K562 (cell line): ENCODE measurements at regions of chr17 and their contacts with region 1.

Region 1: DNA sequence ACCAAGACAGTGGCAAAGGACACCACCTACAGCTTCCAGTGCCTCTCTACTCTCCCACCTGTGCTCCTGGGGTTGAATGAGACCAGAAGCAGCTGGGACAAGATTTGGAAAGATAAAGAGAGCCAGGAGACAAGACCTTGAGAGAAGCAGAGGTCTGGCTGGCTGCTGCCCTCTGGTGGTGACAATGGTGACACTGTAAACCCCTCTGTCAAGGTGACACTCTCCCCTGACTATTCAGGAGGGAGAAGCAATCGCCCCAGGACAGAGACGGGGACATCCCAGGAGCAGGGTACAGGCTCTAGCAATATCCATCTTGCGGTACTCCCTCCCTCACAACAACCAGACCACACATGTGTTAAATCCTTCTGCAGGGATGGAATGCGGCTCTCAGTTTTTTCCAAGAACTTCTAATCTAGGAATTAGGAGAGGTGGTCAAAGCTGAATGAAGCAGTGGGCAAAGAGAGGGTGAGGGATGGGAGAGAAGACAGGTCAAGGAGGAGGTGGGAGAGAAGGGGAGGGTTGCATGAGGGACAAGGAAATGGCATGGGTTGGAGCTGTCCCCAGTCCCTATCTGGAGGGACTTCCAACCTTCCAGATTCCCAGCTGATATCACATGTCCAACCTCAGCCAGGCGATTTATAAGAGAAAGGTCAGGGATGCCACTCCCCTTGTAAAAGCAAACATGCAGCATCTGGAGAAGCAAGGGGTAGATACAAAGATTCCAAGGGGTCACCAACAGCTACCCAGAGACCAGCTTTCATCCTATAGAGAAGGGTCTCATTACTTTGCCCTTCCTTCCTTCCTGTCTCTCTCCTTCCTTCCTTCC is 2.9 kb downstream of the PHOSPHO1 start:
- DNase-seq: peak; percentile 80 to 82 (median 82)
- ATAC-seq: peak; percentile 83
- H3K4me3 ChIP-seq: no peak overlapping the region
- H3K27ac ChIP-seq: no peak overlapping the region
- H3K4me1 ChIP-seq: peaks cover 5 to 33% of the 10 kb centered on the region in 2 experiments; a peak in 4 of 5 replicates
- H3K27me3 ChIP-seq: peaks cover 0 to 55% of the 10 kb centered on the region in 2 experiments; a peak in 3 of 5 replicates
- CTCF ChIP-seq: peak; percentile 86 to 91 (median 86)
- EP300 ChIP-seq: no peak
- POLR2A ChIP-seq: no peak
- RAD21 ChIP-seq: peak; percentile 71 to 83

Region 2: DNA sequence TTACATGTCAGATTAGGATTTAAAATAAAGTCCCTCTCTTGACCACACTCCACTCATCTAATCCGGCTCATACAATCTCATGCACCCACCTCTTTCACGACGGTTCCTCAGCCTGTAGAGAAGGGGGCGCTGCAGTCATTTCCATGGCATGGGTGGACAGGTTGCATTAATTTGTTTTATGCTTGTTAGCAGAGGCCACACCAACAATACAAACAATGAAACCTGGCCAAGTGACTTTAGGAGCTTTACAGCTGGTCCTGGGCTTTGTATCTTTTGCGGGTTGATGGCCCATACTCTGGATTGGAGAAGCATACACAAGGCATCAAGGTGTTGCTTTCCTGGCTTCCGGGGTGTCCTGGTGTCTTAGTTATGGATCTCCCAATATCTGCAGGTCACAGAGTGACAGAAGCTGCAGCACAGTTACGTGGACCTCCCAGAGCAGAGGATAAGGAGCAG is 273.3 kb before region 1 on chr17:
- CTCF ChIA-PET with region 1: no interaction called
- POLR2A ChIA-PET with region 1: no interaction called
- in situ Hi-C with region 1: no loop called
- intact Hi-C with region 1: loop called (anchors 5 kb)
- DNase-seq: peak; percentile 46 to 83 (median 62)
- ATAC-seq: peak; percentile 98
- H3K4me3 ChIP-seq: no peak overlapping the region
- H3K27ac ChIP-seq: no peak overlapping the region
- H3K4me1 ChIP-seq: peaks cover 0 to 3% of the 10 kb centered on the region in 2 experiments; a peak in 2 of 5 replicates
- H3K27me3 ChIP-seq: no peaks in the 10 kb centered on the region
- CTCF ChIP-seq: peak; percentile 89 to 95 (median 90)
- EP300 ChIP-seq: no peak
- POLR2A ChIP-seq: no peak
- RAD21 ChIP-seq: peak; percentile 95 to 99

Region 3: DNA sequence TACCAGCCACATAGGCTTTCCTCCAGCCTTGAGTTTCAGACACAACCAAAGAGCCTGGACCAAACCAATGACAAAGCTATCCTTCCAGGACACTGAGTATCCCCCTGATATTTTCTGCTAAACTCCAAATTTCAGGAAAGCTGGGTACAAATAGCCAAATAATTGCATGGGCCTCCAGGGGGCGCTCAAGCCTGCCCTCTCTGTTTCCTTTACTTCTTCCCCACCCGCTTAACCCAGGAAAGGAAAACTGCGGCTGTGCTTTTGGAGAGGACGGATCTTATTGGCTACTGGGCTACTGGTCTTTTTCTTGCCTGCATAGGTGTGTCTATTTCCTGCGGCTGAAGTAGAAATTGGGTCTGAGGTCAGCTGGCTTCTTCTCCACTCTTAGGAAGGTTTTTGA is 47.3 kb before region 1 on chr17:
- CTCF ChIA-PET with region 1: interaction called, 6 read pairs
- POLR2A ChIA-PET with region 1: no interaction called
- in situ Hi-C with region 1: no loop called
- intact Hi-C with region 1: loop called (anchors 2 kb)
- DNase-seq: peak; percentile 74 to 78 (median 76)
- ATAC-seq: peak; percentile 87
- H3K4me3 ChIP-seq: no peak overlapping the region
- H3K27ac ChIP-seq: no peak overlapping the region
- H3K4me1 ChIP-seq: no peaks in the 10 kb centered on the region; a peak in 1 of 5 replicates
- H3K27me3 ChIP-seq: no peaks in the 10 kb centered on the region
- CTCF ChIP-seq: peak; percentile 80 to 93 (median 91)
- EP300 ChIP-seq: no peak
- POLR2A ChIP-seq: no peak
- RAD21 ChIP-seq: peak; percentile 49 to 82

Region 4: GRCh38 chr17:49191917-49192741 is 35.5 kb before region 1 on chr17:
- CTCF ChIA-PET with region 1: no interaction called
- POLR2A ChIA-PET with region 1: interaction called, 3 read pairs
- in situ Hi-C with region 1: no loop called
- intact Hi-C with region 1: loop called (anchors 5 kb)
- DNase-seq: peak; percentile 67 to 93 (median 72)
- ATAC-seq: peak; percentile 79
- H3K4me3 ChIP-seq: peak overlapping the region; percentile 72
- H3K27ac ChIP-seq: peak overlapping the region; percentile 99
- H3K4me1 ChIP-seq: peaks cover 7 to 9% of the 10 kb centered on the region in 2 experiments; a peak in 3 of 5 replicates
- H3K27me3 ChIP-seq: no peaks in the 10 kb centered on the region
- CTCF ChIP-seq: peak; percentile 43 to 59 (median 45)
- EP300 ChIP-seq: peak; percentile 69
- POLR2A ChIP-seq: peak; percentile 84
- RAD21 ChIP-seq: peak in 1 of 2 experiments; percentile 40; a peak in 3 of 4 replicates

Region 5: DNA sequence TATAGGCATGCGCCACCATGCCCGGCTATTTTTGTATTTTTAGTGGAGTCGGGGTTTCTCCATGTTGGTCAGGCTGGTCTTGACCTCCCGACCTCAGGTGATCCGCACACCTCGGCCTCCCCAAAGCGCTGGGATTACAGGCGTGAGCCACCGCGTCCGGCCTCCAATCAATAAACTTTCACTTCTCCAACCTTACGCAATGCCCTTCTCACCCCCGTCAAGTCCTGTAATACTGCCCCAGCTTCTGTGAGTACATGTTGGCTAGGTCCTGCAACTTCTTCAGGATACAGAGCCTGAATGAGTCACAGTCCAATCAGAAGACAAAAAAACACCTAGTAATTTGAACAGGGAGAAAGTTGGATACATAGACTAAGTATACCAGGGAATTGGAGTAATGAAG is 50.0 kb after region 1 on chr17:
- CTCF ChIA-PET with region 1: no interaction called
- POLR2A ChIA-PET with region 1: no interaction called
- in situ Hi-C with region 1: no loop called
- intact Hi-C with region 1: no loop called
- DNase-seq: no peak
- ATAC-seq: no peak
- H3K4me3 ChIP-seq: no peak overlapping the region
- H3K27ac ChIP-seq: no peak overlapping the region
- H3K4me1 ChIP-seq: no peaks in the 10 kb centered on the region
- H3K27me3 ChIP-seq: peaks cover 15 to 59% of the 10 kb centered on the region in 2 experiments
- CTCF ChIP-seq: no peak
- EP300 ChIP-seq: no peak
- POLR2A ChIP-seq: no peak
- RAD21 ChIP-seq: no peak

Region 6: DNA sequence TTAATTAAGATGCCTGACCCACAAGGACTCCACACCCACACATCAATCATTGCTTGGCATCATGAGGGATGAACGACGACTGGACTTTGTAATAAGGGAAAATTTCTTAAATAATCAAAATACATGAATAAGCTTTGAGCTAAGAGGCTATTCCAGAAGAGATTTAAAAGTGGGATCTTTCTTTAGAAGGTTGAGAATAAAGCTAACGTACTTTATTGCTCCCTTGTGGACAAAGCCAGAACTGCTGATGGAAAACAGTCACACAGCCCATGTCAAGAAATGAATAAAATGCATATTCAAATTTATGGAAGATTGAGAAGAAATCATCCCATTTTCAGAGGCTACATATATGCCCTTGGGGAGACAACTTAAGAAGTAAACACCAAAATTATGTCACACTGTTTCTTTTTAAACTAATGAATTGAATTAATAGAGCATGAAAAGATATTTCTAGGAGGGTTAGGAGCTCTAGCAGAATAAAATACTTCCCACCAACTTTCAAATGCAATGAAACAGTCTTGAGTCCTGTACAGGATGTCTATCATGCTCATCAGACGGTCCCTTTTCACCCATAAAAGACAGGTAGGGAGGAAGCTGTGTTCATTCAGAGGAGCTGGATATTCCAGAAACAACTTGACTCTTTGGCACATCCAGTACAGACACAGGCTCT is 63.2 kb after region 1 on chr17:
- CTCF ChIA-PET with region 1: interaction called, 6 read pairs
- POLR2A ChIA-PET with region 1: no interaction called
- in situ Hi-C with region 1: no loop called
- intact Hi-C with region 1: loop called (anchors 5 kb)
- DNase-seq: peak; percentile 32 to 57 (median 48)
- ATAC-seq: peak; percentile 78
- H3K4me3 ChIP-seq: no peak overlapping the region
- H3K27ac ChIP-seq: no peak overlapping the region
- H3K4me1 ChIP-seq: peaks cover 3 to 8% of the 10 kb centered on the region in 2 experiments; a peak in 3 of 5 replicates
- H3K27me3 ChIP-seq: peaks cover 3 to 4% of the 10 kb centered on the region in 2 experiments; a peak in 3 of 5 replicates
- CTCF ChIP-seq: peak; percentile 51 to 81 (median 64); a peak in 5 of 6 replicates
- EP300 ChIP-seq: no peak
- POLR2A ChIP-seq: no peak
- RAD21 ChIP-seq: peak; percentile 56 to 79

Region 7: DNA sequence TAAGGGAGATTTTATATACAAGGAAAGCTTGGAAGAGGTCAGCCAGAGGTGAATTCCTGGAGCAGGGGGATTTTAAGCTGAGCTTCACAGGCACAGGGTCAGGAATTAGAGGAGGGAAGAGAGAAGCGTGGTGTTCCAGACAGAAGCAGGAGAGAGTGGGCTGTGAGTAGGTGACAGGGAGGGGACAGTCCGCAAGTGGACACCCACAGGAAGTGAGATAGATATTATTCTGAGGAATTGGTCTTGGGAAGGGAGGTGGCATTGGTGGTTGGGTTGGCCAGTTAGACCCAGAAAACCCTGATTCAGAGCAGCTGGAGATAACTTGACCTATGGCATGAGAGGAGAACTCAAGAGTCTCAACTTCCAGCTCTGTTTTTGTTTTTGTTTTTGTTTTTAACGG is 172.3 kb after region 1 on chr17:
- CTCF ChIA-PET with region 1: interaction called, 4 read pairs
- POLR2A ChIA-PET with region 1: no interaction called
- in situ Hi-C with region 1: no loop called
- intact Hi-C with region 1: loop called (anchors 5 kb)
- DNase-seq: no peak
- ATAC-seq: no peak
- H3K4me3 ChIP-seq: no peak overlapping the region
- H3K27ac ChIP-seq: no peak overlapping the region
- H3K4me1 ChIP-seq: no peaks in the 10 kb centered on the region; a peak in 1 of 5 replicates
- H3K27me3 ChIP-seq: no peaks in the 10 kb centered on the region; a peak in 1 of 5 replicates
- CTCF ChIP-seq: no peak
- EP300 ChIP-seq: no peak
- POLR2A ChIP-seq: no peak
- RAD21 ChIP-seq: no peak

Region 8: GRCh38 chr17:49434821-49435670 is 207.4 kb after region 1 on chr17:
- CTCF ChIA-PET with region 1: no interaction called
- POLR2A ChIA-PET with region 1: no interaction called
- in situ Hi-C with region 1: no loop called
- intact Hi-C with region 1: no loop called
- DNase-seq: peak; percentile 82 to 96 (median 92)
- ATAC-seq: peak; percentile 98
- H3K4me3 ChIP-seq: no peak overlapping the region
- H3K27ac ChIP-seq: no peak overlapping the region
- H3K4me1 ChIP-seq: peaks cover 0 to 5% of the 10 kb centered on the region in 2 experiments; a peak in 1 of 5 replicates
- H3K27me3 ChIP-seq: peaks cover 21 to 42% of the 10 kb centered on the region in 2 experiments; a peak in 4 of 5 replicates
- CTCF ChIP-seq: peak; percentile 75 to 82 (median 80)
- EP300 ChIP-seq: no peak
- POLR2A ChIP-seq: no peak
- RAD21 ChIP-seq: peak; percentile 44 to 71